ENCODE measurements at regions of chr7 and their contacts with region 1.

Region 1: GRCh38 chr7:7182156-7183060 is at the start of gene C1GALT1:
- DNase-seq: peak; percentile 98
- ATAC-seq: peak; percentile 98
- total RNA-seq, gene C1GALT1: 14.1 TPM

Region 2: GRCh38 chr7:7237201-7237977 is 55.0 kb after region 1 on chr7:
- intact Hi-C with region 1: loop called (anchors 10 kb)
- DNase-seq: no peak
- ATAC-seq: no peak

Region 3: GRCh38 chr7:7640221-7641128 is 458.1 kb after region 1 on chr7 and contains the start of gene UMAD1:
- intact Hi-C with region 1: loop called (anchors 10 kb)
- DNase-seq: peak; percentile 99
- ATAC-seq: peak; percentile 100
- total RNA-seq, gene UMAD1: 14.3 TPM